ENCODE measurements at regions of chr5 and their contacts with region 1.

Region 1: GRCh38 chr5:141878711-141879425 is 658 bp upstream of the PCDH1 start:
- DNase-seq: peak; percentile 88 to 93 (median 90)
- H3K4me3 ChIP-seq: peak overlapping the region; percentile 53 to 76
- H3K4me3 Mint-ChIP-seq: peak overlapping the region; percentile 78 to 92 (median 86)
- H3K27ac ChIP-seq: no peak overlapping the region
- H3K27ac Mint-ChIP-seq: peak overlapping the region; percentile 31 to 88 (median 62)
- H3K4me1 ChIP-seq: peaks cover 40% of the 10 kb centered on the region
- H3K4me1 Mint-ChIP-seq: peaks cover 20 to 49% (median 28%) of the 10 kb centered on the region in 4 donors
- H3K27me3 ChIP-seq: peaks cover 60% of the 10 kb centered on the region
- H3K27me3 Mint-ChIP-seq: peaks cover 54 to 63% of the 10 kb centered on the region in 2 donors

Region 2: GRCh38 chr5:141681695-141682641 is 196.9 kb before region 1 on chr5 and contains the start of gene ARAP3:
- CTCF ChIA-PET with region 1: interaction called, 15 read pairs
- POLR2A ChIA-PET with region 1: interaction called, 8 read pairs
- intact Hi-C with region 1: no loop called
- DNase-seq: peak in 2 of 5 donors; percentile 24 to 47
- H3K4me3 ChIP-seq: peak within 1 kb of the TSS in 1 of 2 donors; percentile 17
- H3K4me3 Mint-ChIP-seq: peak within 1 kb of the TSS; percentile 78 to 86 (median 83)
- H3K27ac ChIP-seq: no peak within 1 kb of the TSS
- H3K27ac Mint-ChIP-seq: peak within 1 kb of the TSS; percentile 47 to 91 (median 77)
- H3K4me1 ChIP-seq: peaks cover 33% of the 10 kb centered on the region
- H3K4me1 Mint-ChIP-seq: peaks cover 14 to 36% (median 26%) of the 10 kb centered on the region in 4 donors
- H3K27me3 ChIP-seq: no peaks in the 10 kb centered on the region
- H3K27me3 Mint-ChIP-seq: peaks cover 0 to 2% of the 10 kb centered on the region in 2 donors
- total RNA-seq, gene ARAP3: 14.7 to 16.4 TPM

Region 3: DNA sequence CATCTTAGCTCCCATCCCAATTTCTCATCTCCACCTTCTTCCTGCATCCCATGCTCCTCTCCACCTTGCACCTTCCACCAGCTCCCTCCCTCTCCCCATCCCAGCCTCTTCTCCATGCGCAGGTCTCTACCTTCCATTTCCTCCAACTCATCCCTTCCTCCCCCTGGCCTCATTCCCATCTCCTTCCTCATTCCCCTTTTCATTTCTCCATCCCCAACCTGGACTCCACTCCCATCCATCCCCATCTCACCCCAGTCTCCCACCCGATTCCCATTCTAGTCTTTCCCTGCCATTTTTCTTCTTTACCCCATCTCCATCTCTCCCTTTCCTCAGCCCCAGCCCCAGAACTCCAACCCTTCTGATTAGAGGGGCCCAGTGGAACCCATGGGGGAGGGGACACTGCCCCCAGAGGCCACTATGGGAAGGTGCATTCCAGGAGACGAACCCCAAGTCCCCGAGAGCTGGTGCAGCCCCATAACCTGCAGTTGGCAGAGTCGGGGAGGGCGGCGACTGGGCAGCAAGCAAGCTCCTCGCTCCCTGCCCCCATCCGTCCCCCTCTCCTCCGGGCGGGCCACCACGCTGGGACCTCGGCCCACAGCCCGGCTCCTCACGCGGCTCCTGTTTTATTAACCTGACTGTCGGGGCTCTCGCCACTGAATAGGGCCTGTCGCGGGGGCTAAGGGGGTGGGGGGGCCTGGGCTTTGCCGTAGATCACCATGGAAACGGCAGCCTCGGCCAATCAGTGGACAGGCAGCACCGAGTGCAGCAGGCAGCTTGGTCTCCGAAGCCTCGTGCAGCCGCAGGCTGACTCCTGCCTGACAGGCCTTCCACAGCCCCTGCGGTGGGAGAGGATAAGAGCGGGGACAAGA is 67.3 kb before region 1 on chr5:
- CTCF ChIA-PET with region 1: interaction called, 18 read pairs
- POLR2A ChIA-PET with region 1: interaction called, 3 read pairs
- intact Hi-C with region 1: loop called (anchors 2 kb)
- DNase-seq: peak in 4 of 5 donors; percentile 4 to 45 (median 17)
- H3K4me3 ChIP-seq: no peak overlapping the region
- H3K4me3 Mint-ChIP-seq: peak overlapping the region in 1 of 8 donors; percentile 26
- H3K27ac ChIP-seq: no peak overlapping the region
- H3K27ac Mint-ChIP-seq: no peak overlapping the region
- H3K4me1 ChIP-seq: no peaks in the 10 kb centered on the region
- H3K4me1 Mint-ChIP-seq: peaks cover 0 to 3% (median under 1%) of the 10 kb centered on the region in 4 donors
- H3K27me3 ChIP-seq: peaks cover 15% of the 10 kb centered on the region
- H3K27me3 Mint-ChIP-seq: peaks cover 30 to 64% of the 10 kb centered on the region in 2 donors

Region 4: DNA sequence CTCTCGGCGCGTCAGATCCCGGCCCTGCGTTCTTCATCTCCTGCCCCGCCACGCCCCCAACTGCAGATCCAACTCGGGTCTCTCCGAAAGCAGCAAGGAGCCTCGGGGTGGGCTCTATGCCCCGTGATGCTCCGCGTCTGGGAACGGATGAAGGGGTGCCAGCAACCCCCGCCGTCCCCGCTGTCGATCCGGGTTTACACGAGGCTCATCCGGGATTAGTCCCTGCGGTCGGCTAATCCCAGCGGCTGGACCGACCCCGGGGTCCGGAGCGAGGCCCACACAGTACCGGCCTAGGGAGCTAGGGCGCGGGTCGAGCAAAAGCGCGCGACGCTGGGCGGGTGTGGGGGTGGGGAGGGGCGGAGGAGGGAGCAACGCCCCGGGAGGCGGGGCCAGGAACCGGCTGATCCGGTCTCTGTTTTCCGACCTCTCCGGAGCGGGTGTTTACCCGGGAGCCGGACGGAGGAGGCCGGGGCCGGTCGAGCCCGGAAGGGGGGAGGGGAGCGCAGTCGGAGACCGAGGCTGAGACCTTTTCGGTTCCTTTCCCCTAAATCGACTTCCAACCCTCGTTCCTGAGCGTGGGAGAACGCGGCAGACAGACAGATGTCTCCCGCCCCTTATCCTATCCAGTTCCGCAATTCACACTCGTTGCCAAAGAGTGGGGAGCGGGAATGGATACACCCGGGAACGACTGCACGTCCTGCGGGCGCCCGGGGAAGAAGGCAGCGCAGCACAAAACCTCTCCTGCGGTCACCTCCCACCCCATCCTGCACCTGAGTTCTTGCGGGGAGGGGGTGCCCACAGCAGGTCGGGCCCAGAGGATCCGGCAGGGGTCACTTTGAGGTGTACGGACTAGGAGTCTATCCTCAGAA is 29.3 kb before region 1 on chr5:
- CTCF ChIA-PET with region 1: interaction called, 11 read pairs
- POLR2A ChIA-PET with region 1: interaction called, 24 read pairs
- intact Hi-C with region 1: loop called (anchors 1 kb)
- DNase-seq: peak; percentile 54 to 74 (median 56)
- H3K4me3 ChIP-seq: peak overlapping the region; percentile 83 to 88
- H3K4me3 Mint-ChIP-seq: peak overlapping the region; percentile 90 to 93 (median 92)
- H3K27ac ChIP-seq: peak overlapping the region; percentile 66
- H3K27ac Mint-ChIP-seq: peak overlapping the region; percentile 75 to 93 (median 88)
- H3K4me1 ChIP-seq: peaks cover 9% of the 10 kb centered on the region
- H3K4me1 Mint-ChIP-seq: peaks cover 5 to 14% (median 11%) of the 10 kb centered on the region in 4 donors
- H3K27me3 ChIP-seq: no peaks in the 10 kb centered on the region
- H3K27me3 Mint-ChIP-seq: peaks cover 1 to 5% of the 10 kb centered on the region in 2 donors

Region 5: DNA sequence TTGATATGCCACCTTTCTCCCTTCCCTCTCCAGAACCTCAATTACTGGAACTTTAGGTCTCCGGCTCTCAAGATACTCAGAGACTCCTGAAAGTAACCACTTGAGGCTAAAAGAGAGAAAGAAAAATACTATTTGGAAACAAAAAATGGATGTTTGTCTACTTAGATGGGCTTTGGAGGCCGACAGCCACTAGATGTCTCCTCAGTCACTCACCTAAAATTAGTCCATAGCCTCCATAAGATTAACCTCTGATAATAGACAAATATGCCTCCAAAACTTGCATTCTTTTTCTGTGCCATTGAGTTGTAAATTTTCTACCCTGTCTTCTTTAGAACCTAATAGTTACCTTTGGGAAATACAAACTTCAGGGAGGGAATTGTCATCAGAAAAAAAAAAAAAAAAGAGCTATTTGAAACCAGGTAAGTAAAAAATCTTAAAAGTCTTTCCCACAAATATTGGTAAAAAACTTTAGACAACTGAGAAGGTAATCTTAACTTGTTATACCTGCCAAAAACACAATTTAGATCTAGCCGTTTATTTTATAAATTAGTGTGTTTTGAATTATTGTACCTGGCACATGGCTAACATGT is 10.5 kb after region 1 on chr5:
- CTCF ChIA-PET with region 1: interaction called, 15 read pairs
- POLR2A ChIA-PET with region 1: no interaction called
- intact Hi-C with region 1: no loop called
- DNase-seq: no peak
- H3K4me3 ChIP-seq: no peak overlapping the region
- H3K4me3 Mint-ChIP-seq: no peak overlapping the region
- H3K27ac ChIP-seq: no peak overlapping the region
- H3K27ac Mint-ChIP-seq: no peak overlapping the region
- H3K4me1 ChIP-seq: no peaks in the 10 kb centered on the region
- H3K4me1 Mint-ChIP-seq: peaks cover 0 to 1% (median 0%) of the 10 kb centered on the region in 4 donors
- H3K27me3 ChIP-seq: peaks cover under 1% of the 10 kb centered on the region
- H3K27me3 Mint-ChIP-seq: peaks cover 26 to 34% of the 10 kb centered on the region in 2 donors

Region 6: GRCh38 chr5:141923448-141924352 is 44.8 kb after region 1 on chr5 and contains the start of gene DELE1:
- CTCF ChIA-PET with region 1: interaction called, 10 read pairs
- POLR2A ChIA-PET with region 1: interaction called, 16 read pairs
- intact Hi-C with region 1: loop called (anchors 2 kb)
- DNase-seq: peak; percentile 89 to 92 (median 92)
- H3K4me3 ChIP-seq: peak within 1 kb of the TSS; percentile 76 to 93
- H3K4me3 Mint-ChIP-seq: peak within 1 kb of the TSS; percentile 87 to 97 (median 92)
- H3K27ac ChIP-seq: peak within 1 kb of the TSS; percentile 99
- H3K27ac Mint-ChIP-seq: peak within 1 kb of the TSS; percentile 95 to 98 (median 97)
- H3K4me1 ChIP-seq: peaks cover 31% of the 10 kb centered on the region
- H3K4me1 Mint-ChIP-seq: peaks cover 14 to 48% (median 34%) of the 10 kb centered on the region in 4 donors
- H3K27me3 ChIP-seq: no peaks in the 10 kb centered on the region
- H3K27me3 Mint-ChIP-seq: no peaks in the 10 kb centered on the region
- total RNA-seq, gene DELE1: 73.2 to 83.1 TPM

Measured in CD4-positive, alpha-beta memory T cell (primary cell).